ENCODE measurements at regions of chr7 and their contacts with region 1.

Region 1: DNA sequence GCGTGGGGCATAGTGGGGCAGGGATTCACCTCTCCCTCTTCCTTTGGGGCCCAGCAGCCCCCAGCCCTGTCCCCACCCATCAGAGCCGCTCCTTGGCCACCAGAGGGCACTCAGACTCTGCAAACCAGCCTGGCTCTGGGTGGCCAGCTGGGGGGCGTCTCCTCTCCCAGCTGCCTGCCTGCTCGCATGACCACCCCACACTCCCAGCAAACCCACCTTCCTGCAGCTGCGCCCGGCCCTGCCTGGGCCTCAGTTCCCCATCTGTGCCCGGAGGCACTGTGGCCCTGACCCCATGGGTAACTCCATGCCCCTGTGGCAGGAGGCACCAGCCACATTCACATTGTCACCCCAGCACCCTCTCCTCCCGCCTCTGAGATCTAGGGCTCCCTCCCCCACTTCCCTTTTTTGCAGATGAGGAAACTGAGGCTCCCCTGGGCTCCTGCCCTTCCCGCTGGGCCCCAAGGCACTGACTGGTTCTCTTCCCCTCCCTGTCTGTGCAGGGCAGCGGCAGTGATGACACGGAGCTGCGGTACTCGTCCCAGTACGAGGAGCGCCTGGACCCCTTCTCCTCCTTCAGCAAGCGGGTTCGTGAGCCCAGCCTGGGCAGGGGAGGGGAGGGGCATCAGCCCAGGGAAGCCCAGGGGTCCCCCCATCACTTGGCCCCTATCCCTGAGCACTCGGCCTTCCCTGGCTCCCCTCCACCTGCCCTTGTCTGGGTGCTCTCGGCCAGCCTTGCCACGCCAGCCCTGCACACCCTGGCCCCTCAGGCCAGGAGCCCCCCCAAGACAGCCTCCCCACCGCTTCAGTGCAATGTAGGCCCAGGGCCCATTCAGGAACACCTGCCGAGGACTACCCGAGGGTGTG is 6.9 kb upstream of the SH2B2 start:
- DNase-seq: peak in 1 of 2 donors; percentile 58
- ATAC-seq: peak; percentile 75

Region 2: GRCh38 chr7:101542527-101543241 is 737.1 kb before region 1 on chr7:
- intact Hi-C with region 1: loop called (anchors 5 to 10 kb)
- DNase-seq: peak; percentile 49 to 85
- ATAC-seq: peak; percentile 75

Region 3: GRCh38 chr7:102390697-102391484 is 111.1 kb after region 1 on chr7:
- intact Hi-C with region 1: loop called (anchors 5 kb)
- DNase-seq: peak; percentile 84 to 91
- ATAC-seq: peak; percentile 87